Esophagus squamous epithelium (tissue), 5 donors: ENCODE measurements at regions of chr7 and their contacts with region 1.

Region 1: DNA sequence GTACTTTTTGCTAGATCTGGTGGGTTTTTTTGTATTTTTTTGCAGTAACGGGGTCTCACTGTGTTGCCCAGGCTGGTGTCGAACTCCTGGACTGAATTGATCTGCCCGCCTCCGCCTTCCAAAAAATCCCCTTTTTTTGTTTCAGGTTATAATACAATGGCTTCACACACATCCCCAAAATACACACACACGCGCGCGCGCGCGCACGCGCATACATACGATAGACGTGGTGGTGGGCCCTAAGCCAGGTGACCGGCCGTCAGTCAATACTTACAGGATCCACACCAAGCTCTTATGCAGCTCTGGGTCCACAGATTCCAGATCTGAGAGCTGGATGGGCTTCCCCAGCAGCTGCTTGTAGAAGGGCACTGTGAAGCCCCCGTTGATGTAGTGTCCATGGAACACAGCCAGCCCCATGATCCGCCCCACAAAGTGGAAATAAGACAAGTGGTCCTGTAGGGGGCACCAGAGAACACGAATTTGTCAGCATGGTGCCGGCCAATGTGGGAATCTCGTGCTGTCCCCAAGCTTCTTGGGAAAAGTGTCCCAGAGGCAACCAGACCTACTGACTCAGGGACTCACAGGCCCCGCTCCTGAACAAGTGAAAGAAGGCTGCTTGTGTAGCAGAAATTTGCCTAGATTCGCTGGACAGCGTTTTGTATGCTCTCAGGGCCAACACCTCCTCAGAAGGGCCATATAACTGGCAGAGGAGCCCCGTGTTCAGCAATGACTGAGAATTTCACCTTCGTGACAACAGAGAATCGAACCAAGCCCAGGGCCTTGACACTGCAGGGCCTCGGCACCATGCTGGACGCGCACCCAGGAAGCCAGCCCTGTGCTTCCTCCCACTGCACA is 103.6 kb downstream of the SMURF1 start:
- DNase-seq: no peak
- H3K4me3 ChIP-seq: no peak overlapping the region
- H3K27ac ChIP-seq: peak overlapping the region; percentile 47 to 78 (median 72)
- H3K4me1 ChIP-seq: peaks cover 0 to 27% (median 3%) of the 10 kb centered on the region in 3 donors
- H3K27me3 ChIP-seq: no peaks in the 10 kb centered on the region
- CTCF ChIP-seq: peak in 5 of 6 experiments; percentile 60 to 87 (median 82)
- POLR2A ChIP-seq: no peak

Region 2: GRCh38 chr7:99143853-99144672 is 103.7 kb after region 1 on chr7 and contains the start of gene SMURF1:
- intact Hi-C with region 1: loop called (anchors 10 kb)
- DNase-seq: no peak
- H3K4me3 ChIP-seq: peak within 1 kb of the TSS; percentile 81 to 100 (median 94)
- H3K27ac ChIP-seq: peak within 1 kb of the TSS; percentile 97 to 100 (median 100)
- H3K4me1 ChIP-seq: peaks cover 10 to 52% (median 32%) of the 10 kb centered on the region in 3 donors
- H3K27me3 ChIP-seq: no peaks in the 10 kb centered on the region
- CTCF ChIP-seq: peak in 2 of 6 experiments; percentile 14 to 31
- POLR2A ChIP-seq: peak in 2 of 4 donors; percentile 57
- total RNA-seq, gene SMURF1: 16.4 to 36.2 (median 24.6) TPM

Region 3: GRCh38 chr7:99312316-99313203 is 272.2 kb after region 1 on chr7:
- intact Hi-C with region 1: loop called (anchors 2 kb)
- DNase-seq: no peak
- H3K4me3 ChIP-seq: peak overlapping the region in 1 of 4 donors; percentile 10
- H3K27ac ChIP-seq: no peak overlapping the region
- H3K4me1 ChIP-seq: peaks cover 0 to 22% (median 4%) of the 10 kb centered on the region in 3 donors
- H3K27me3 ChIP-seq: no peaks in the 10 kb centered on the region
- CTCF ChIP-seq: peak; percentile 79 to 95 (median 92)
- POLR2A ChIP-seq: no peak

Region 4: DNA sequence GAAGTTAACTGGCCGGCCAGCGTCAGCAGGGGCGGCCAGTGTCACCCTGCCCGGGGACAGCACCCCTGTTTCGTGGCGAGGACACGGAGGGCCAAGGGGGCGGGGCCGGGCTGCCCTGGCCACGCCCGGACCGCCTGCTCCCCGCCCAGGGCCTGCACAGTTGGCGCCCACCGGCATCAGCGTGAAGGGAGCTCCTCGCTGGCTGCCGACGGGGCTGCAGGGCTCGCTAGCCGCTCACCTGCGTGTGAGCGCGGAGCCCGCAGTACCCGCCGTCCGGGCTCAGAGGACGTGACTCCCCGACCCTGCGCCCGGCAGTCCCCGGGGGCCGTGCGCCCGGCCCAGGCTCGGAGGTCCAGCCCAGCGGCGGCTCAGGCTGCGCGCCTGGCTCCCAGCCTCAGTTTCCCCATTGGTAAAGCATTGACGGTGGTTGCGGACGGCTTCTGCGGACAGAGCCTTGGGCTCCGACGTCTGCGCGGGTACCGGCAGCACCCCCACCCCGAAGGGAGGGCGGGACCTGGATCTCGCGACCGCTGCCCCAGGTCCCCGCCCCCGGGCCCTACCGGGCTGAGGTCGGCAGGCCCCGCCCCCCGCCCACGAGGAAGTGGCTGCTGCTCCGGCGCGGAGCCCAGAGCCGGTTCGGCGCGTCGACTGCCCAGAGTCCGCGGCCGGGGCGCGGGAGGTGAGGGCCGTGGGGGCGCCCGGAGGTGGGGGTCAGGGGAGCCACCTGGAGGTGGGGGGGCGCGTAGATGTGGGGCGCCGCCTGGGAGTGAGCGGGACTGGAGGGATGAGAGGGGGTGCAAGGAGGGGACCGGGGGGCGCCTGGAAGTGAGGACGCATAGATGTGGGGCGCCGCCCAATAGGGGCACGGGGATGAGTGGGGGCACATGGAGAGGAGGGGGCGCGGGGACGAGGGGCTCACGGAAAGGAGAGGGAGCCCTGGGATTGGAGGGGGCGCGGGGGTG is 334.1 kb after region 1 on chr7 and contains the start of gene ARPC1B:
- intact Hi-C with region 1: no loop called
- DNase-seq: peak; percentile 39
- H3K4me3 ChIP-seq: peak within 1 kb of the TSS; percentile 61 to 97 (median 80)
- H3K27ac ChIP-seq: peak within 1 kb of the TSS; percentile 83 to 94 (median 89)
- H3K4me1 ChIP-seq: peaks cover 12 to 82% (median 21%) of the 10 kb centered on the region in 3 donors
- H3K27me3 ChIP-seq: no peaks in the 10 kb centered on the region
- CTCF ChIP-seq: no peak
- POLR2A ChIP-seq: peak in 2 of 4 donors; percentile 47 to 66
- total RNA-seq, gene ARPC1B: 27.9 to 166 (median 128) TPM